CD8-positive, alpha-beta T cell (primary cell): ENCODE measurements at regions of chr11 and their contacts with region 1.

Region 1: GRCh38 chr11:1882519-1883238 is 9.0 kb downstream of the PRR33 start:
- DNase-seq: peak; percentile 57 to 91 (median 83)
- ATAC-seq: peak; percentile 91
- H3K4me3 ChIP-seq: no peak overlapping the region
- H3K4me3 Mint-ChIP-seq: no peak overlapping the region
- H3K27ac ChIP-seq: no peak overlapping the region
- H3K27ac Mint-ChIP-seq: no peak overlapping the region
- H3K4me1 ChIP-seq: peaks cover 14% of the 10 kb centered on the region
- H3K4me1 Mint-ChIP-seq: peaks cover 12% of the 10 kb centered on the region
- H3K27me3 ChIP-seq: no peaks in the 10 kb centered on the region
- H3K27me3 Mint-ChIP-seq: no peaks in the 10 kb centered on the region
- CTCF ChIP-seq: peak; percentile 69

Region 2: DNA sequence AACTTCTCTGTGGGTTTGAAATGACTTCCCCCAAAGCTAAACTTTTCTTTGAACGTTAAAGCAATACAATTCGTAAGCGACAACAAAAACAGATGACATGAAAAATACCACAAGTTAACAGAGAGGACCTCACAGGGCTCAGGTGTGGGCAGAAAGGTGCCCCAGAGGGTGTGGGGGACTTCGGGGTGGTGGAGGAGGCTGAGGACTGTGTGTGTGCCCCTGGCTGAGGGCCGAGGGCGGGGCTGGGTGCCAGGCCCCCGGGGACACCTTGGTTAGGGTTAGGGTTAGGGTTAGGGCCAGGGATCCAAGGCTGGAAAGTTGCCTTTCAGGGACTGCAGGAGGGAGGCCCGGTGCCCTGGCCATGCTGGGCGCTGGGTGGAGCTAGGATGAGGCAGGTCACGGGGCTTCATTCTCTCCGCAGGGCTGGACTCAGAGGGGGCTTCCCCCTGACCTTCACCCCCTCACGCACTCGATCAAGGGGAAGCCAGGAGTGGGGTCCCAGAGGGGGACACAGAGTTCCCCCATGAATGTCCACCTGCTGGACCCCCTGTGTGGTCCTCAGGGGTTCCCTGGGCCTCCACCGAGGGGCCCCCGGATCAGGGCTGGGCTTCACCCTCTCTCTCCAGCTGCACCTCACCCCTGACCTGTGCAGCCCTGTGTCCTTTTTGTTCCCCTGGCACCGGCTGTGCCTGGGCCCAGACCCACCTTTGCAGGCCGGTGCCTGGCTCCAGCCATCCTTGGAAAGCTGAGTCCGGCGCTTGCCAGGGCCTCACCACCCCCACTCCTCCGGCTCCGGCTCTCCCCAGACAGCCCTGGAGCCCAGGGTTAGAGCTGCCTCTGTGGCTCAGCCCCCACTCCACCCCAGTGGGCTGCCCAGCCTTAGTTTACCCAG is 36.9 kb before region 1 on chr11:
- CTCF ChIA-PET with region 1: interaction called, 74 read pairs
- POLR2A ChIA-PET with region 1: interaction called, 21 read pairs
- intact Hi-C with region 1: no loop called
- DNase-seq: peak in 4 of 9 experiments; percentile 51 to 79 (median 60)
- ATAC-seq: peak; percentile 68
- H3K4me3 ChIP-seq: peak overlapping the region in 1 of 2 experiments; percentile 1
- H3K4me3 Mint-ChIP-seq: peak overlapping the region; percentile 80
- H3K27ac ChIP-seq: peak overlapping the region in 1 of 2 experiments; percentile 57
- H3K27ac Mint-ChIP-seq: peak overlapping the region; percentile 87
- H3K4me1 ChIP-seq: peaks cover 68% of the 10 kb centered on the region
- H3K4me1 Mint-ChIP-seq: peaks cover 61% of the 10 kb centered on the region
- H3K27me3 ChIP-seq: no peaks in the 10 kb centered on the region
- H3K27me3 Mint-ChIP-seq: no peaks in the 10 kb centered on the region
- CTCF ChIP-seq: no peak

Region 3: DNA sequence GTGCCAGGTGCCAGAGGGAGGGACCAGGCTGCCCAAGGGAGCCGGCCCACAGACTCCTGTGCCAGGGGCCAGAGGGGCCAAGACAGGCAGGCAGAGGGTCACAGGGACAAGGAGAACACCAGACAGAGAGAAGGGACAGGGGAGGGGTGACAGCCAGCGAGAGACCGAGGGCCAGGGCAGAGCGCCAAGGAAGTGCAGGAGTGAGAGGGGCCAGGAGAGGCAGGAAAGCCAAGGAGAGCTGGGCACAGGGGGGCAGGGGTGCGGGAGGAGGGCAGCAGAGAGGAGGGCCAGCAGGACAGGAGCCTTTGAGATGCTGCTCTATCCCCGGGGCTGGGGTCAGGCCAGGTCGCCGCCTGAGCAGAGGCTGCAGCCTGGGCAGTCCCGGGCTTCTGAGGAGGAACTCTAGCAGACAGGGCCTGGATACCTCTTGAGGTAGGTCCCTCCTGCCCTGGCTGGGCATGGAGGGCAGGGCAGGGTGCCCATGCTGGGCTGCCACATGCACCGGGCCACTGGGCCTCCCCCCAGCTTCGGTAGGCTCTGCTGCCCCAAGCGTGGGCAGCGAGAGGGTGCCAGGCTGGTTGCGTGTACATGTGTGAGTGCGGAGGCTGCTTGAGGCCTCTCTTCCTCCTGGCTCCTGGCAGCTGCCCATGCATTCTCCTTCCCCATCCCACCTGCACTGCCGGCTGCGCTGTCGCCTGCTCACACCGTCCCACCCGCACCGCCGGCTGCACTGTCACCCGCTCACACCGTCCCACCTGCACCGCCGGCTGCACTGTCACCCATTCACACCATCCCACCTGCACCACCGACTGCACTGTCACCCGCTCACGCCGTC is 17.6 kb before region 1 on chr11:
- CTCF ChIA-PET with region 1: interaction called, 24 read pairs
- POLR2A ChIA-PET with region 1: no interaction called
- intact Hi-C with region 1: no loop called
- DNase-seq: peak in 1 of 9 experiments; percentile 16
- ATAC-seq: no peak
- H3K4me3 ChIP-seq: no peak overlapping the region
- H3K4me3 Mint-ChIP-seq: no peak overlapping the region
- H3K27ac ChIP-seq: no peak overlapping the region
- H3K27ac Mint-ChIP-seq: peak overlapping the region; percentile 37
- H3K4me1 ChIP-seq: peaks cover 72% of the 10 kb centered on the region
- H3K4me1 Mint-ChIP-seq: peaks cover 41% of the 10 kb centered on the region
- H3K27me3 ChIP-seq: no peaks in the 10 kb centered on the region
- H3K27me3 Mint-ChIP-seq: no peaks in the 10 kb centered on the region
- CTCF ChIP-seq: no peak

Region 4: GRCh38 chr11:1917671-1918516 is 35.2 kb after region 1 on chr11:
- CTCF ChIA-PET with region 1: interaction called, 9 read pairs
- POLR2A ChIA-PET with region 1: interaction called, 3 read pairs
- intact Hi-C with region 1: loop called in 1 of 2 experiments (anchors 5 kb)
- DNase-seq: peak in 2 of 9 experiments; percentile 31 to 44
- ATAC-seq: peak; percentile 54
- H3K4me3 ChIP-seq: no peak overlapping the region
- H3K4me3 Mint-ChIP-seq: no peak overlapping the region
- H3K27ac ChIP-seq: no peak overlapping the region
- H3K27ac Mint-ChIP-seq: no peak overlapping the region
- H3K4me1 ChIP-seq: peaks cover 11% of the 10 kb centered on the region
- H3K4me1 Mint-ChIP-seq: peaks cover 26% of the 10 kb centered on the region
- H3K27me3 ChIP-seq: peaks cover 0 to 2% of the 10 kb centered on the region in 2 experiments
- H3K27me3 Mint-ChIP-seq: peaks cover 11% of the 10 kb centered on the region
- CTCF ChIP-seq: peak; percentile 29